ENCODE measurements at regions of chr21 and their contacts with region 1.

Region 1: GRCh38 chr21:46122237-46122671 is 24.3 kb downstream of the COL6A2 start:
- DNase-seq: peak; percentile 50

Region 2: DNA sequence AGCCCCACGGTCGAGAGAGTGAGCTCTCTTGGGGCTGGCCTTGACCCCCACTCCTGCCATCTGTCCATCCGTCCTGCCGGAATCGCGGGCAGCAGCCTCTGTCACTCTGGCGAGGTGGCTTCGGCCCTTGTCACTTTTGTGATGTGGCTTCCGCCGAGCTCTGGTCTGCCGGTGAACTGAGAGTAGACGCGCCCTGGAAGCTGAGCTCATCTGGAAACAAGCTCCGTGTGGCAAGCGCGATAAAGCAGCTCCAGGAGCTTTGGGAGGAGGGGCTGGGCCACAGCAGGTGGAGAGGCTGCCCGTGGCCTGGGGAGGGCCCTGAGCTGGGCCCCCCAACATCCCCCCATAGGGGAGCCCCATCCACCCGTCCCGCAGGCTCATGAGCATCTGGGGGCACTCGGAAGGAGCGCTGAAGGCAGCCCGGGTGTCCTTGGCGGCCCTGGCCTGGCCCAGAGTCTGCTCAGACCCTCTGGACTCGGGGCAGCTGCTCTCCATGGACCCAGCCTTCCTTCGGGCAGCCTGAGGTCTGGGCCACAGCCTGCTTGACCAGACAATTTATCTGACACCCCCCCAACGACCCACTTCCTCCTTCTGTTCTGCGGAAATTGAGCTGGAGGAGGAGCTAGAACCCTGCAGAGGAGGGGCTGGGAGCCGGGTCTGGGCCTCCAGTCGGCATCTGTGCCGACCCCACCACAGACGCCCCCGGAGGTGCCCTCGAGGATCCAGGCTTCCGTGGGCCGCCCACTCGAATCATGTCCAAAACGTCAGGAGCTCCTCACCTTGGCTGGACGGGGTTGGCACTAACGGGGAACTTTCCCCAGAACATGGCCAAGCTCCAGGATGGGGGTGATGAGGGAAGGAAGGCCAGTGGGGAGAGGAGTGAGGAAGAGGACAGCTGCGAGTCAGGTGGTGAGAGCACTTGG is 639.1 kb before region 1 on chr21:
- intact Hi-C with region 1: no loop called
- DNase-seq: no peak

Region 3: GRCh38 chr21:45995686-45996179 is 126.5 kb before region 1 on chr21:
- intact Hi-C with region 1: loop called (anchors 10 kb)
- DNase-seq: no peak

Region 4: DNA sequence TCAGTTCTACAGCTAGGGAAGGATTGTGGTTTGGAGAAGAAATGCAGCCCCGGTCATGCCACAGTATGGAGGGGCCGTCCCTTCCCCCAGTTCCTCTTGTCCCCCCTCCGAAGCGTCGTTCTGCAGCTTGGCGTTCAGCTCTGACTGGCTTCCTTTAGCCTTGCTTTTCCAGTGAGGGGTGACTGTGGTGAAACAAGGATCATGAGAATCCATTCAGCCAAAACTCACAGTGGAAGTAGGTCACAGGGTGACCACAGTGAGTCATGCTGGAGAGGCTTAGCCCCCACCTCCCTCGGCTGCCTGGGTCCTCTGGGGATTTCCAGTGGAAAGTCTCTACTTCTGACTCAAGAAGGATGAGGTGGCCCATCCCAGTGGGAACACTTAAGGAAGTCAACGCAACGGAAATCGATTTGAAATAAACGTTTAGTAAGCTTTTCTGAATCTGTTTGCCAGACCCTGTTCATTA is 61.6 kb before region 1 on chr21:
- intact Hi-C with region 1: no loop called
- DNase-seq: peak; percentile 82

Region 5: DNA sequence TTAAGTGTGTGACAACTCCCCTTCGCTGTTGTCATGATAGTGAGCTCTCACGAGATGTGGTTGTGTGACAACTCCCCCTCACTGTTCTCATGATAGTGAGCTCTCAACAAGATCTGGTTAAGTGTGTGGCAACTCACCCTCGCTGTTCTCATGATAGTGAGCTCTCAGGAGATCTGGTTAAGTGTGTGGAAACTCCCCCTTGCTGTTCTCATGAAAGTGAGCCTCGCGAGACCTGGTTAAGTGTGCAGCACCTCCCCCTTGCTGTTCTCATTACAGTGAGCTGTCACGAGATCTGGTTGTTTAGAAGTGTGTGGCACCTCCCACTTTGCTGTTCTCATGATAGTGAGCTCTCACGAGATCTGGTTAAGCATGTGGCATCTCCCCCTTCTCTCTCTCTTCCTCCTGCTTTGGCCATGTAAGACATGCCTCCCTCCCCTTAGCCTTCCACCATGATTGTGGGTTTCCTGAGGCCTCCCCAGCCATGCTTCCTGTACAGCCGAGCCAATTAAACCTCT is 131.4 kb after region 1 on chr21:
- intact Hi-C with region 1: no loop called
- DNase-seq: no peak